ENCODE measurements at regions of chr3 and their contacts with region 1.

Region 1: DNA sequence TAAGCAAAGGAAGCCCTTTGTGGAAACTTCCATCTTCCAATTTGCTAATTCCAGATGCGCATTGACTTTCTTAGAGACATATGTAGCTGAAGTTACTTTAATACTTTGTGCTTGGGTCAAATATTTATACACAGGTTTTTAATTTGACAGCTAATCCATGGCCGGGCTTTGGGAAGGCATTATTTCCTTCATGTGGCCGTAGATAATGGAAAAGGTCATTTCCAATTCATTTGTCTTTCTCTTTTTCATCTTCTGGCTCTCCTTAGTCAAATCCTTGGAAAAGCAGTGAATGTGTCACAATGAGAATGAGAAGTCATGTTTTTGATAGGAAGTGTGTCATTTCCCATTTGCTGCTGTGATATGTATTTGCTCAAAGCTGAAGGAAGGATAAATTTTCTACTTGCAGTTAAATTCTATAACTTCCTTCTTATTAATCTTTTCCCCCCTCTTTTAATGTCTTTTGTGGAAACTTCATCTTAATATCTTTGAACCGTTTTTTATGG is 323.3 kb downstream of the CLSTN2 start:
- DNase-seq: no peak
- H3K4me3 Mint-ChIP-seq: no peak overlapping the region
- H3K27ac Mint-ChIP-seq: no peak overlapping the region
- H3K4me1 Mint-ChIP-seq: no peaks in the 10 kb centered on the region
- H3K27me3 Mint-ChIP-seq: no peaks in the 10 kb centered on the region
- CTCF ChIP-seq: no peak

Region 2: DNA sequence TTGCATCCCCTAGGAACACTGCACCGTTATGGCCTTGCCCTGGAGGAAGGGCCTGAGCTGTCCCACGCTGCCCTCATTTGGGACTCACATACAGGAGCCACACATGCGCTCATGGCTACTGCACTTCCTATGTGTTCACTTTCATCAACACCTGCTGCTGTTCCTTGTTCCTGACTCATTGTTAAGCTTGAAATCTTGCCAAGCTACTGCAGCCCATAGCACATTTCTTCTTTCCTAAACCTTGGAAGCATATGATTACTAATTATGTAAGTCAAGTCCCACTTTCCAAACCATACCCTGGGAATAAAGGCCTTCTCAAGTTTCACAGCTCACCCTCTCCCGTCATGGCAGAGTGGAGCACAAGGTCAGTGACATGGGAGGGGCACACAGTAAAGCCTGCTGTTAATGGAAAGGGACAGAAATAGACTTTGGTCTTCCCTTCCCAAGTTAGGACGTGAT is 15.4 kb before region 1 on chr3:
- CTCF ChIA-PET with region 1: no interaction called
- intact Hi-C with region 1: no loop called
- DNase-seq: no peak
- H3K4me3 Mint-ChIP-seq: no peak overlapping the region
- H3K27ac Mint-ChIP-seq: no peak overlapping the region
- H3K4me1 Mint-ChIP-seq: no peaks in the 10 kb centered on the region
- H3K27me3 Mint-ChIP-seq: no peaks in the 10 kb centered on the region
- CTCF ChIP-seq: no peak

Region 3: DNA sequence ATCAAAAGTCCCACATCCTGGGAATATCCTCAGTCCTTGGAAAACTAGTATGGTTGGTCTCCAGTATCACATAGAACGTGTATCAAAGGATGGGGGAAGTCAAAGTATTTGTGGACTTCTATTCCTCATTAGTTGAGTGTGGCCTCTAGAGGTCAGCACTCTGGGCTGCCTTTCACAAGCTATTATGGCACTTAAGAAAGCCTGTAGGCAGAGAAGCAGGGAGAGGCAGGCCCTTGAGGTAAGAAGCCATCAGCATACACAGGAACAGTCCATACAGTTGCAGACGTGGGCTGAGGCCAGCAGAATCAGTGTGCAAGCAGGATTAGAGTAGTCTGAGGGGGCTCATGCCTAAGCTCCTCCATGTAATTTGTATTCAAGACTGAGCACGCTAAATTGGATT is 18.4 kb after region 1 on chr3:
- CTCF ChIA-PET with region 1: no interaction called
- intact Hi-C with region 1: loop called (anchors 1 kb)
- DNase-seq: peak; percentile 21
- H3K4me3 Mint-ChIP-seq: no peak overlapping the region
- H3K27ac Mint-ChIP-seq: no peak overlapping the region
- H3K4me1 Mint-ChIP-seq: no peaks in the 10 kb centered on the region
- H3K27me3 Mint-ChIP-seq: peaks cover 84% of the 10 kb centered on the region
- CTCF ChIP-seq: no peak